A549 (cell line): ENCODE measurements at regions of chr14 and their contacts with region 1.

Region 1: GRCh38 chr14:64823305-64823861 is 56.3 kb downstream of the SPTB start:
- DNase-seq: peak; percentile 78 to 95
- ATAC-seq: peak; percentile 96 to 99
- H3K4me3 ChIP-seq: no peak overlapping the region
- H3K27ac ChIP-seq: peak overlapping the region; percentile 44 to 76; a peak in 4 of 6 replicates
- H3K4me1 ChIP-seq: peaks cover 7% of the 10 kb centered on the region; the same call in 1 of the 3 replicates
- CTCF ChIP-seq: peak; percentile 81
- EP300 ChIP-seq: no peak
- POLR2A ChIP-seq: no peak
- RAD21 ChIP-seq: peak; percentile 73 to 83

Region 2: DNA sequence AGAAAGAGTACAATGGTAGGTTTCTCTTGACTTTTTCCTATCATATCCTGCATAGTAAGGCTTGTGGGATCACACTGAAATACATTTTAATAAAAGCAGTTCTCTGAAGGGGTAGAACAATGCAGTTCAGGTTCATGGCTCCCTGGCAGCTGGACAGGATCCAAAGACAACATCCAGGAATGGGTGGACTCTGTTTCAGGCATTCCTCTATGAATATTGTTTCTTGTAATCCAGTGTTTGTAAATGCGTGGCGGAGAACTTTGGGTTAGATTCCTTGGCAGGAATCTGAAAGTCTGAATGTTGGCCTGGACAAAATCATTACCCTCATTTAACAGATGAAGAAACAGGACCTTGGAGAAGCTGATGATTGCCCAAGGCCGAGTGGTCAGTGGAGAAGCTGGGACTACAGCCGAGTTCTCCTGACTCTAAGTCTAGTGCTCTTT is 927.1 kb before region 1 on chr14:
- CTCF ChIA-PET with region 1: no interaction called
- POLR2A ChIA-PET with region 1: no interaction called
- DNase-seq: peak in 1 of 2 experiments; percentile 55
- ATAC-seq: peak; percentile 42 to 73; a peak in 4 of 6 replicates
- H3K4me3 ChIP-seq: no peak overlapping the region
- H3K27ac ChIP-seq: peak overlapping the region; percentile 16 to 63; a peak in 5 of 6 replicates
- H3K4me1 ChIP-seq: peaks cover 44% of the 10 kb centered on the region
- CTCF ChIP-seq: no peak
- EP300 ChIP-seq: no peak; a peak in 1 of 5 replicates
- POLR2A ChIP-seq: no peak
- RAD21 ChIP-seq: no peak

Region 3: GRCh38 chr14:64645220-64645892 is 178.0 kb before region 1 on chr14:
- CTCF ChIA-PET with region 1: no interaction called
- POLR2A ChIA-PET with region 1: no interaction called
- DNase-seq: peak in 1 of 2 experiments; percentile 94
- ATAC-seq: peak; percentile 78 to 80
- H3K4me3 ChIP-seq: no peak overlapping the region
- H3K27ac ChIP-seq: peak overlapping the region; percentile 79 to 93
- H3K4me1 ChIP-seq: peaks cover 61% of the 10 kb centered on the region
- CTCF ChIP-seq: no peak
- EP300 ChIP-seq: peak; percentile 91 to 98
- POLR2A ChIP-seq: no peak
- RAD21 ChIP-seq: peak in 1 of 2 experiments; percentile 37; a peak in 2 of 5 replicates

Region 4: DNA sequence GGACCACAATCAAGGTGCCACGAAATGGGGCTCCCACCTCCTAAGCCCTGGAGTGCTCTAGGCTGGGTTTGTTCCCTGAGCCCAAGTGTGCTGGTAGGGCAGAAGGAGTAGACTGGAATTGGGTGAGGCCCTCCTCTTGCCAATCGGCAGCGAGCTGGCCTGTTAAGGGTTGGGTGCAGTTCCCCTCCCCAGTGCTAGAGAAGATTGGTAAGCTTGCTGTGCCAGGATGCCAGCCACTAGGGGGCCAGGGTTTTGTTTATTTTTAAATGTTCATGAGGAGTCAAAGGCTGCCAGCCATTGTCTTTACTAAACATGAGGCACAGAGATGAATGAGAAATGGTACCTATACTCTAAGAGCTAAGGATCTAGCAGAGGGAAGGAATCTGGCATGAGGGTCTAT is 23.4 kb before region 1 on chr14:
- CTCF ChIA-PET with region 1: interaction called, 47 read pairs
- POLR2A ChIA-PET with region 1: no interaction called
- DNase-seq: peak; percentile 53 to 62
- ATAC-seq: peak; percentile 30 to 71; a peak in 4 of 6 replicates
- H3K4me3 ChIP-seq: no peak overlapping the region
- H3K27ac ChIP-seq: peak overlapping the region; percentile 15 to 32; a peak in 1 of 6 replicates
- H3K4me1 ChIP-seq: peaks cover 17% of the 10 kb centered on the region
- CTCF ChIP-seq: peak; percentile 55
- EP300 ChIP-seq: no peak
- POLR2A ChIP-seq: no peak
- RAD21 ChIP-seq: peak in 1 of 2 experiments; percentile 30; a peak in 2 of 5 replicates

Region 5: GRCh38 chr14:64835431-64835830 is 12.0 kb after region 1 on chr14:
- CTCF ChIA-PET with region 1: interaction called, 46 read pairs
- POLR2A ChIA-PET with region 1: no interaction called
- DNase-seq: no peak
- ATAC-seq: no peak
- H3K4me3 ChIP-seq: no peak overlapping the region
- H3K27ac ChIP-seq: no peak overlapping the region
- H3K4me1 ChIP-seq: no peaks in the 10 kb centered on the region
- CTCF ChIP-seq: no peak
- EP300 ChIP-seq: no peak
- POLR2A ChIP-seq: no peak
- RAD21 ChIP-seq: no peak

Region 6: DNA sequence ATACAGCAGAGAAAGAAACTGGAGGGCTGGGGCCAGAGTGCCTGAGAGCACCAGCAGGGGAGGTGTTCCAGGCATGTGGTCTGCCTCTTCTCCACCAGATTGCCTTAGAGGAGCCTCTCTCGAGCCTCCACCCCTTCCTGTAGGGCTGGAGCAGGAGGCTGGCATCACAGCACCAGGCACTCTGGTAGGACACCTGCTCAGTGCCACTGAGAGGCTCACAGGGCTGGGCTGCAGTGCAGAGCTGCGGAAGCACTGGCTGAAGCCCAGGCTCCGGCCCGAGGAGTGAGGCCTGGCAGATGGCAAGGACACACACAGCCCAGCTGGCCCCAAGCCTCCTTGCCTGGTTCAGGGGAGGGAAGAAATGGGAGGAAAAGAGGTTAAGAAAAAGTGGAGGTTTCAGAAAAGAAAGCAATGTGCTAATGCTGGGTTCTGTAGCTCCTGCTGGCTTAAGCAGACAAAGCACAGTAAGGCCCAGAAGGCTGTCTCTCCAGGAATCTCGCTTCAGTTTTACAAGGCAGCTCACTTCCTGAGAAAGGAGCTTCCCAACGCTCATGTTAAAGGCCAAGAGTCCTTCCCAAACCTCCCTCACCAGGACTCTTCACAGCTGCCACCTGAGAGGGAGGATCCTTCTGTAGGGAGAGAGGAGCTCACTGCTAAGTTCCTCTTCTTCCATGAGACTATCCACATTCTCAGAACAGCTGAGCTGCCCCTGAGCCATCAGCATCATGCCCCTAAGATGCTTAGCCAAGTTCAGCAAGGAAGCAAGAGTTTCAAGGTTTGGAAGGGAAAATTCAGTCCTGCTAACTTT is 32.5 kb after region 1 on chr14:
- CTCF ChIA-PET with region 1: interaction called, 11 read pairs
- POLR2A ChIA-PET with region 1: no interaction called
- DNase-seq: no peak
- ATAC-seq: no peak
- H3K4me3 ChIP-seq: no peak overlapping the region
- H3K27ac ChIP-seq: no peak overlapping the region
- H3K4me1 ChIP-seq: no peaks in the 10 kb centered on the region
- CTCF ChIP-seq: no peak
- EP300 ChIP-seq: no peak
- POLR2A ChIP-seq: no peak
- RAD21 ChIP-seq: no peak

Region 7: GRCh38 chr14:64899958-64900357 is 76.6 kb after region 1 on chr14:
- CTCF ChIA-PET with region 1: interaction called, 18 read pairs
- POLR2A ChIA-PET with region 1: no interaction called
- DNase-seq: no peak
- ATAC-seq: no peak
- H3K4me3 ChIP-seq: no peak overlapping the region
- H3K27ac ChIP-seq: no peak overlapping the region
- H3K4me1 ChIP-seq: no peaks in the 10 kb centered on the region
- CTCF ChIP-seq: no peak
- EP300 ChIP-seq: no peak
- POLR2A ChIP-seq: no peak
- RAD21 ChIP-seq: no peak

Region 8: GRCh38 chr14:64986578-64987571 is 163.5 kb after region 1 on chr14 and contains the start of gene FNTB:
- CTCF ChIA-PET with region 1: interaction called, 13 read pairs
- POLR2A ChIA-PET with region 1: interaction called, 3 read pairs
- DNase-seq: peak; percentile 97 to 98
- ATAC-seq: peak; percentile 95 to 97
- H3K4me3 ChIP-seq: peak within 1 kb of the TSS; percentile 83
- H3K27ac ChIP-seq: peak within 1 kb of the TSS; percentile 86 to 93
- H3K4me1 ChIP-seq: peaks cover 12% of the 10 kb centered on the region; the same call in 1 of the 3 replicates
- CTCF ChIP-seq: peak; percentile 72
- EP300 ChIP-seq: peak in 1 of 2 experiments; percentile 23; a peak in 1 of 5 replicates
- POLR2A ChIP-seq: peak; percentile 56
- RAD21 ChIP-seq: peak; percentile 83 to 90
- polyA plus RNA-seq, gene FNTB: 28.5 and 35.8 TPM in 2 replicates